A673 (cell line): ENCODE measurements at regions of chr2 and their contacts with region 1.

Region 1: DNA sequence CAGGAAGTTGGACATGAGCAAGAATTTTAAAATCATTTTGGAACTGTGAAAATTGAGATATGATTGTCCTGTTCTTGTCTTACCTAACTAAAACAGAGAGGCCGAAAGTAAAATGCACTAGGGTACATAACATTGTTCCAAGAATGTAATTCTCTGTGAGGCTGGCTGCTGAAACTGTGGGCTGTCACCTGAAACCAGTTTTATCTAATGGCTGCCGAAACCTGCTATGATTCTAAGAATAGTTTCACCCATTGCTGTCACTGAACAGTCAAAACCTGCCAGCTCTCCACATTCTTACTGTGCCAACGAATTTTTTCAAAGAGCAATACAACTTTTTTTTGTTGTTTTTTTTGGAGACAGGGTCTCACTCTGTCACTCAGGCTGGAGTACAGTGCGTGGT is 119.3 kb upstream of the ZSWIM2 start:
- DNase-seq: no peak
- H3K4me3 ChIP-seq: no peak overlapping the region
- H3K27ac ChIP-seq: no peak overlapping the region
- H3K4me1 ChIP-seq: no peaks in the 10 kb centered on the region
- H3K27me3 ChIP-seq: no peaks in the 10 kb centered on the region
- CTCF ChIP-seq: no peak

Region 2: GRCh38 chr2:187349326-187349944 is 381.2 kb after region 1 on chr2:
- CTCF ChIA-PET with region 1: no interaction called
- POLR2A ChIA-PET with region 1: interaction called, 10 read pairs
- intact Hi-C with region 1: no loop called
- DNase-seq: no peak
- H3K4me3 ChIP-seq: no peak overlapping the region
- H3K27ac ChIP-seq: no peak overlapping the region
- H3K4me1 ChIP-seq: peaks cover 4% of the 10 kb centered on the region
- H3K27me3 ChIP-seq: no peaks in the 10 kb centered on the region
- CTCF ChIP-seq: no peak

Region 3: GRCh38 chr2:187403568-187404260 is 435.4 kb after region 1 on chr2:
- CTCF ChIA-PET with region 1: no interaction called
- POLR2A ChIA-PET with region 1: no interaction called
- intact Hi-C with region 1: no loop called
- DNase-seq: peak; percentile 79
- H3K4me3 ChIP-seq: no peak overlapping the region
- H3K27ac ChIP-seq: peak overlapping the region; percentile 48
- H3K4me1 ChIP-seq: peaks cover 30% of the 10 kb centered on the region
- H3K27me3 ChIP-seq: no peaks in the 10 kb centered on the region
- CTCF ChIP-seq: no peak